Activated CD8-positive, alpha-beta T cell treated with anti-CD3 and anti-CD28 coated beads for 36 hours (primary cell): ENCODE measurements at regions of chr12 and their contacts with region 1.

Region 1: DNA sequence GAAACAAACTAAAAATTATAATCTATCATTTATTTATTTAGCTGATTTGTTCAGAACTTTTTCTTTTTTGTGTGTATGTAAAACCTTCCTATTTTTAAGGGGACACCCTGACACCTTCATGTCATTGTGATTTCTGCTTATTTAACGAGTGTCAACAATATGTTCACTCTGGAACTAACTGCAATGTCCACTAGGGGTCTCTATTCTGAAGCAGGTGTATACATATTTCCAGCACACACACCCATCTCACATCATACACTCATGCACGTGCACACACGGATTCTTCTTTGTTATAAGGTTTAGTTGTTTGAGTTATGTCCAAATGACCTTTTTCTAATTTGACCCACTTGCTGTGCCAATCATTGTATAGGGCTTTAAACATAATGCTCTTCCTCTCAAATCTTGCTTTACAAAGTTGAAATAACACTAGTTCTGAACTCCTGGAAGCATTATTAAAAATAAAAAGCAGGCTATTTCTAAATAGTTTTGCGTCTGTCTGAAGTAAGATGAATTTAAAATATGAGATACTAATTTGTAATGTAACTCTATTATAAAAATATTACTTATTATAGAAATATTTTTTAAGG is 15.5 kb downstream of the E2F7 start:
- DNase-seq: peak; percentile 13
- ATAC-seq: peak; percentile 86
- H3K4me3 Mint-ChIP-seq: no peak overlapping the region
- H3K27ac Mint-ChIP-seq: no peak overlapping the region
- H3K4me1 Mint-ChIP-seq: peaks cover 3% of the 10 kb centered on the region
- H3K27me3 Mint-ChIP-seq: no peaks in the 10 kb centered on the region
- CTCF ChIP-seq: peak; percentile 80

Region 2: DNA sequence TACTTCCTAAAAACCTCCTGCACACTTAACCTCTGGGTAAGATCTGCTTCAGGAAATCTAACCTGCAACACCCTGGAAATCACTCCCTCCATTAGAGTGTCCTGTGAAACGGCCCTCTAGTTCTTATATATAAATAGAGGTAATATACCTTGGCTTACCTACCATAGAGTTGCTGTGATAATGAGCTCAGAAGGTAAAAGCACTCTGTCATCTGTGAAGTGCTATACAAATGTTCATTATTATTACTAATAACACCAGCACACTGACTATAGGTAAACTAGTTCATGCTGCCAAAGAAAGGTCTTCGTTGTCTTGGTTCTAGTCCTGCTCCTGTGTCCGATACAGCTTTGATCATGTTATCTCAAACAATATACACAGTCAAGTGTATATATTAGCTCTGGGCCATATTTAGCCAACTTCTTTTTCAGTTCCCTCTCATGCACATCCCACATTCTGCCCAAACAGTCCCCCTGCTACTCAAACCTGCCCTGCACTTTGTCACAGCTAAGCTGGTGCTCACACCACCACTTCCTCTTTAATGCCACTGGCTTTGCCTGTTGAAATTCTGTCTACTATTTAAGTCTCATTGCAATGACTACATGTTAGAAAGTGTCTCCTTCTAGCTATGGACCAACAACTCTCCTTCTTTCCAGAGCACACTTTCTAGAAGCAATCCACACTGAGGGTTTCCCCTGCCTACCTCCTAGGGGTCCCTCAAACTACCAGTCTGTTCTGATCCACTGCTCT is 10.4 kb after region 1 on chr12:
- CTCF ChIA-PET with region 1: interaction called, 33 read pairs
- POLR2A ChIA-PET with region 1: no interaction called
- intact Hi-C with region 1: no loop called
- DNase-seq: no peak
- ATAC-seq: no peak
- H3K4me3 Mint-ChIP-seq: no peak overlapping the region
- H3K27ac Mint-ChIP-seq: no peak overlapping the region
- H3K4me1 Mint-ChIP-seq: peaks cover 5% of the 10 kb centered on the region
- H3K27me3 Mint-ChIP-seq: peaks cover 34% of the 10 kb centered on the region
- CTCF ChIP-seq: no peak

Region 3: GRCh38 chr12:77324763-77325468 is 275.1 kb after region 1 on chr12:
- CTCF ChIA-PET with region 1: no interaction called
- POLR2A ChIA-PET with region 1: no interaction called
- intact Hi-C with region 1: loop called (anchors 5 kb)
- DNase-seq: peak; percentile 37
- ATAC-seq: peak; percentile 74
- H3K4me3 Mint-ChIP-seq: peak overlapping the region; percentile 33
- H3K27ac Mint-ChIP-seq: no peak overlapping the region
- H3K4me1 Mint-ChIP-seq: peaks cover 6% of the 10 kb centered on the region
- H3K27me3 Mint-ChIP-seq: peaks cover 40% of the 10 kb centered on the region
- CTCF ChIP-seq: no peak